T-cell (primary cell): ENCODE measurements at regions of chr15 and their contacts with region 1.

Region 1: GRCh38 chr15:52735231-52736089 is 54.7 kb downstream of the ONECUT1 start:
- DNase-seq: peak; percentile 15 to 88 (median 52)
- ATAC-seq: peak; percentile 73 to 84 (median 80)
- H3K4me3 ChIP-seq: no peak overlapping the region
- H3K4me3 Mint-ChIP-seq: no peak overlapping the region
- H3K27ac ChIP-seq: no peak overlapping the region
- H3K27ac Mint-ChIP-seq: no peak overlapping the region
- H3K4me1 ChIP-seq: peaks cover under 1 to 2% of the 10 kb centered on the region in 2 experiments
- H3K4me1 Mint-ChIP-seq: peaks cover 2 to 8% (median 6%) of the 10 kb centered on the region in 3 donors
- H3K27me3 ChIP-seq: no peaks in the 10 kb centered on the region
- H3K27me3 Mint-ChIP-seq: peaks cover 11 to 18% of the 10 kb centered on the region in 2 donors

Region 2: GRCh38 chr15:52256366-52256765 is 479.1 kb before region 1 on chr15:
- CTCF ChIA-PET with region 1: interaction called, 8 to 40 read pairs
- POLR2A ChIA-PET with region 1: interaction called, 4 to 5 read pairs
- DNase-seq: peak; percentile 44 to 89 (median 67)
- ATAC-seq: peak; percentile 74 to 87 (median 80)
- H3K4me3 ChIP-seq: peak overlapping the region in 1 of 2 donors; percentile 26
- H3K4me3 Mint-ChIP-seq: peak overlapping the region; percentile 45 to 60 (median 58)
- H3K27ac ChIP-seq: no peak overlapping the region
- H3K27ac Mint-ChIP-seq: peak overlapping the region in 1 of 2 donors; percentile 67
- H3K4me1 ChIP-seq: peaks cover 7 to 14% of the 10 kb centered on the region in 2 experiments
- H3K4me1 Mint-ChIP-seq: peaks cover 16 to 31% (median 20%) of the 10 kb centered on the region in 3 donors
- H3K27me3 ChIP-seq: no peaks in the 10 kb centered on the region
- H3K27me3 Mint-ChIP-seq: no peaks in the 10 kb centered on the region

Region 3: DNA sequence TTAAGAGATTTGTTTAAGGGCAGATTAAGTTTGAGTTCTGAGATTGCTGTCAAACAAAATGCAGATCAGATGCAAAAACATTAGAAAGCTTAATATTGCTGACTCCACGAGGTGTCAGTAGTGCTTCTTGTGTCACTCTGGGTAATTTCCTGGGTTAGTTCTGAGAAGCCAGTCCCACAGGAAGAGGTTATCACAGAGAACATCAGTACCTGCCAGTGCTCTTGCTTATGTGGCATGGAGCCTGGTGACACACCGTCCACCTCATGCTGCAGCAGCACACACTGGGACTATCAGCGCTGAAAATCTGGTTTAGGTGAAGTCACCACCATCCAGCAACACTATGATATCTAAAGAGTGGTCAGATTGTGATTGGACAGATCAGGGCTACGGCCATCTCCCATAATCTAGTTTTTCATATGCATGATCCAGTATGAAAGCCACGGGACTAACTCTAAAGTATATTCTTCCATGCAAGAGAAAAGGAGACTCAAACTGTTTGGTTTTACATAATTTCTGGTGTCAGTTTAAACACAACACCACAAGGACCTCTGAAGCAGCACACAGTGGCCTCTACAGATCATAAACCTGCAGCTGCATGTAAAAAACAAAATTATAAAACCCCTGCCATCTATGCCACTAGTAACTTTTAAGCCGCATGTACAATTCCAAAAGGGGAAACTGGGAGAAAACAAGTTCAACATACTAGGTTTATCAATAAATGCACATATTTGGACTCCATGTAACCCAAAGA is 403.8 kb before region 1 on chr15:
- CTCF ChIA-PET with region 1: interaction called, 3 to 43 read pairs
- POLR2A ChIA-PET with region 1: no interaction called
- DNase-seq: peak in 34 of 35 experiments; percentile 5 to 81 (median 29)
- ATAC-seq: peak; percentile 96 to 100 (median 100)
- H3K4me3 ChIP-seq: no peak overlapping the region
- H3K4me3 Mint-ChIP-seq: peak overlapping the region in 2 of 3 donors; percentile 26 to 51
- H3K27ac ChIP-seq: peak overlapping the region; percentile 26
- H3K27ac Mint-ChIP-seq: peak overlapping the region; percentile 86 to 87
- H3K4me1 ChIP-seq: peaks cover 7% of the 10 kb centered on the region in 2 experiments
- H3K4me1 Mint-ChIP-seq: peaks cover 16 to 21% (median 17%) of the 10 kb centered on the region in 3 donors
- H3K27me3 ChIP-seq: no peaks in the 10 kb centered on the region
- H3K27me3 Mint-ChIP-seq: no peaks in the 10 kb centered on the region

Region 4: DNA sequence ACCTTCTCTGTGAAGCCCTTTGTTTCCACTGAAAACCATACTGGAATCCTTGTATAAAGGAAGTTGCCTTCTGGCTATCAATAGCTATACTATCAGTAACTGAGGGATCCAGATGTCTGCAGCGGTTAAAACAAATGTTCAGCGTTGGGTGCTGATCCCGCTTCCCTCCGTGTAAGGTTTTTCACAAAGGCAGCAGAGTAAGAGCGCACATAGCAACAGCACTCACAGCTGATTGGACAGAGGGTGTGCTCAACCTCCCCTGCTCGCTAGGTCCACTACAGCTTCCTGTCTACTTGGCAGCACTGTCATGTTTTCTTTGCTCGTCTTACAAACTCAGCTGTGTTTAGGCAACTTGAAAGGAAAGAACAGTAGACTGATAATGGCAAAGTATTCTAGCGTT is 83.6 kb before region 1 on chr15:
- CTCF ChIA-PET with region 1: interaction called in 1 of 2 experiments, 15 read pairs
- POLR2A ChIA-PET with region 1: no interaction called
- DNase-seq: peak in 32 of 35 experiments; percentile 6 to 69 (median 26)
- ATAC-seq: peak; percentile 89 to 99 (median 99)
- H3K4me3 ChIP-seq: no peak overlapping the region
- H3K4me3 Mint-ChIP-seq: peak overlapping the region in 1 of 3 donors; percentile 41
- H3K27ac ChIP-seq: peak overlapping the region; percentile 8
- H3K27ac Mint-ChIP-seq: peak overlapping the region; percentile 2 to 60
- H3K4me1 ChIP-seq: peaks cover 0 to 2% of the 10 kb centered on the region in 2 experiments
- H3K4me1 Mint-ChIP-seq: peaks cover 22 to 39% (median 29%) of the 10 kb centered on the region in 3 donors
- H3K27me3 ChIP-seq: no peaks in the 10 kb centered on the region
- H3K27me3 Mint-ChIP-seq: no peaks in the 10 kb centered on the region